GM13976 (cell line): ENCODE measurements at regions of chr2 and their contacts with region 1.

Region 1: DNA sequence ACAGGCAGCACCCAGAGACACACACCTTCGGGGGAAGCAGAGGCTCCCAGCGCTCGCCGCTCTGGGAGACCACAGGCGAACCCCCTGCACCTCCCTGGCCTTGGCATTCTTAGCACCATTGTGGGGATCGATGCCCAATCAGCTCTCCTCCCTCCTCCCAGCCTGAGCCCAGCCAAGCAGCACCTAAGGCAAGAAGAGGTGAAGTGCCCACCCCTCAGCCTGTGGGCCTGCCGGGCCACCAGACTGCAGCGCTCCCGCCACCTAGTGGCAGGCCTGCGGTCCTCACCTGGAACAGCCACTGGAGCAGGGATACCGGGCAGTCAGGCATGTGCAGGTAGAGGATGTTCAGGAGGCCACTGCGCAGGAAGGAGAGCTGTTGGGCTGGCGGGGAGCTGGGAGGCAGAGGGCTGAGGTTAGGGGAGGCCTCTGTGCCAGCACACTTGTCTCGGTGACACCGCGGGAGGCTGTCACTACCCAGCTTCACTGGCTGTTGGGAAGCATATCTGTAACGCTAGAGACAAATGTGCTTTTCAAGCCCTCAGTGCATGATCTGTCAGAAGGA is 35.2 kb downstream of the FAM178B start:
- DNase-seq: peak; percentile 89
- CTCF ChIP-seq: peak; percentile 95

Region 2: DNA sequence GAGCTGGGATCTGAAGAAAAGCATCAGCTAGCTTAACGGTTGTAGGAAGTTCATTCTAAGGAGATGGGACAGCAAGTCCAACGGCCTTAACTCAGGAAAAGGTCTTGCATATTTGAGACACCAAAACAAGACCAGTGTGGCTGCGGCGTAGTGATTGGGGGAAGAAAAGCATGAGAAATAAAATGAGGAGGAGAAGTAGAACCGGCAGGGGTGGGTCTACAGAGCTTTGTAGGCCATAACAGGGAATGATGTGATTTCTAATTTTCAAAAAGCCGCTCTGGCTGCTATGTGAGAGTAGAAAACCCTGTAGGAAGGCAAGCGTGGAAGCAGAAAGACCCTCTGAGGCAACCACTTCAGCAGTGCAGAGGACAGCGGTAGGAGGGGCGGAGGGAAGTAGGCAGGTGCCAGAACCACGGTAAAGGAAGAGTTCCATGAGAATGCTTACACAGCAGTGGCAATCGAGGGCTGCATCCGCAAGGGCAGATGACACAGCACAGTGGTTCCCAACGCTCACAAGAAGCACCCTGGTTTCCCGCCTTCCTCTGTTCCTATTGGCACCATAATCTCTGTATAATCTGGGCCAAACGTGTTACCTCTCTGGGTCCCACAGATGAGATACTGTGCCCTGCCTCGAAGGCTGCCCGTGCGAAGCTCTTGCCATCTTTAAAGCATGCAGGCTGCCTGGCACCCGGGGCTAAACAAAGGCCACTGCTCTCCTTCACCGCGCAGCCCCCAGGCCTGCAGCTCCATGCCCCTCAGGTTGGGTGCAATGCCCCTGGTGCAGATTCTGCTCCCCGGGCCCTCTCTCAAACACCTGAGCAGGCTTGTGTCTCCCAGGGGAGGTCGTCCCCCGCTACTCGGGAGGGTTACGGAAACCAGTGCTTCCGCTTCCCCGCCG is 94.1 kb before region 1 on chr2:
- in situ Hi-C with region 1: loop called (anchors 5 kb)
- DNase-seq: no peak
- CTCF ChIP-seq: no peak

Region 3: GRCh38 chr2:96891491-96892333 is 59.5 kb before region 1 on chr2:
- in situ Hi-C with region 1: no loop called
- DNase-seq: no peak
- CTCF ChIP-seq: no peak

Region 4: DNA sequence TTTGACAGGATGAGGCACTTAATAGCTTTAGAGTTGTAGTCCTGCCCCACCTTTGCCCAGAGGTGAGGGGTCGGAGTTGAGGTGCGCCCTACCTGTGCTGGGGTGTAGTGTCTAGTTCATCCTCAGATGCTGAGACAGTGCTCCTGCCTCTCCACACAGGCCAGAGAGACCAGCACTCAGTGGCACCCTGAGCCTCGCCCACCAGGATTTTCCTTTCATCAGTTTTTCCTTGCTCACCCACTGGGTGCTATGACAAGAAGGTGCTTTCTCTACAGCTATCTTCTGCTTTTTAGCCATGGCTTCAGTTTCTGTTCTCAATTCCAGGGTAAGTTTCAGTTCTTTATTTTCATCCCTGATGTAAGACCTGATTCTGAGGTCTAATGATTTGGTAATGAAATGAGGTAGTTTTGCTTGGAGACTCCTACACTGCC is 1061.4 kb after region 1 on chr2:
- in situ Hi-C with region 1: no loop called
- DNase-seq: peak; percentile 71
- CTCF ChIP-seq: no peak